ENCODE measurements at regions of chr18 and their contacts with region 1.

Region 1: GRCh38 chr18:3593904-3594661 is 144.1 kb downstream of the TGIF1 start:
- DNase-seq: peak; percentile 82 to 97 (median 89)
- ATAC-seq: peak; percentile 81
- H3K4me3 ChIP-seq: peak overlapping the region; percentile 67
- H3K4me3 Mint-ChIP-seq: peak overlapping the region; percentile 91
- H3K27ac ChIP-seq: peak overlapping the region; percentile 93 to 99
- H3K27ac Mint-ChIP-seq: peak overlapping the region; percentile 99
- H3K4me1 ChIP-seq: peaks cover 41% of the 10 kb centered on the region
- H3K4me1 Mint-ChIP-seq: peaks cover 50% of the 10 kb centered on the region
- H3K27me3 ChIP-seq: no peaks in the 10 kb centered on the region
- H3K27me3 Mint-ChIP-seq: no peaks in the 10 kb centered on the region
- CTCF ChIP-seq: peak; percentile 80

Region 2: DNA sequence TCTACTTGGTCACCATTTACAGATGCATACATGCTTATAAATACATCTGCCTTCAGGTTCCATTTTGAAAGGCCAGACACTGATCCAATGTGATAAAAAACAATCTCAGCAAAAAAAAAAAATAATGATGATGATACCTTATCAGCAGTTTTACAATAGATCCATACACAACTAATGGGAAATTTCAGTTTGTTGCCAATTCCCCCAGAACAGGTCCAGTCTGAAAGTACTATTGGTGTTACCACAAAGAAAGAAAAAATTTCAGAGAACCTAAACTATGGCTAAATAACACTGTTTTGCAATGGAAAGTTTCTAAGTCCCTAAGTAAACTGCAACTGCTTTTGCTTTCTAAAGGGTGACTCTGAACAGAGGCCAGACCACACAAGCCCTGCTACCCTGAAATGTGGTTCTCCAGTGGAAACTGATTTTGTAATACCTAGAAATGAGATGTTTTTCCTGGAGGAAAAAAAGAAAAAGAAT is 635.2 kb before region 1 on chr18:
- CTCF ChIA-PET with region 1: no interaction called
- POLR2A ChIA-PET with region 1: no interaction called
- intact Hi-C with region 1: loop called in 1 of 2 experiments (anchors 5 kb)
- DNase-seq: peak in 2 of 9 experiments; percentile 49 to 70
- ATAC-seq: no peak
- H3K4me3 ChIP-seq: no peak overlapping the region
- H3K4me3 Mint-ChIP-seq: peak overlapping the region; percentile 50
- H3K27ac ChIP-seq: peak overlapping the region; percentile 65 to 90
- H3K27ac Mint-ChIP-seq: peak overlapping the region; percentile 97
- H3K4me1 ChIP-seq: peaks cover 92% of the 10 kb centered on the region
- H3K4me1 Mint-ChIP-seq: peaks cover 89% of the 10 kb centered on the region
- H3K27me3 ChIP-seq: no peaks in the 10 kb centered on the region
- H3K27me3 Mint-ChIP-seq: no peaks in the 10 kb centered on the region
- CTCF ChIP-seq: no peak

Region 3: GRCh38 chr18:3062798-3063680 is 531.0 kb before region 1 on chr18:
- CTCF ChIA-PET with region 1: no interaction called
- POLR2A ChIA-PET with region 1: no interaction called
- intact Hi-C with region 1: loop called in 1 of 2 experiments (anchors 10 kb)
- DNase-seq: peak; percentile 42 to 79 (median 72)
- ATAC-seq: peak; percentile 27
- H3K4me3 ChIP-seq: no peak overlapping the region
- H3K4me3 Mint-ChIP-seq: peak overlapping the region; percentile 58
- H3K27ac ChIP-seq: peak overlapping the region; percentile 88 to 95
- H3K27ac Mint-ChIP-seq: peak overlapping the region; percentile 93
- H3K4me1 ChIP-seq: peaks cover 58% of the 10 kb centered on the region
- H3K4me1 Mint-ChIP-seq: peaks cover 67% of the 10 kb centered on the region
- H3K27me3 ChIP-seq: no peaks in the 10 kb centered on the region
- H3K27me3 Mint-ChIP-seq: no peaks in the 10 kb centered on the region
- CTCF ChIP-seq: peak; percentile 85

Region 4: DNA sequence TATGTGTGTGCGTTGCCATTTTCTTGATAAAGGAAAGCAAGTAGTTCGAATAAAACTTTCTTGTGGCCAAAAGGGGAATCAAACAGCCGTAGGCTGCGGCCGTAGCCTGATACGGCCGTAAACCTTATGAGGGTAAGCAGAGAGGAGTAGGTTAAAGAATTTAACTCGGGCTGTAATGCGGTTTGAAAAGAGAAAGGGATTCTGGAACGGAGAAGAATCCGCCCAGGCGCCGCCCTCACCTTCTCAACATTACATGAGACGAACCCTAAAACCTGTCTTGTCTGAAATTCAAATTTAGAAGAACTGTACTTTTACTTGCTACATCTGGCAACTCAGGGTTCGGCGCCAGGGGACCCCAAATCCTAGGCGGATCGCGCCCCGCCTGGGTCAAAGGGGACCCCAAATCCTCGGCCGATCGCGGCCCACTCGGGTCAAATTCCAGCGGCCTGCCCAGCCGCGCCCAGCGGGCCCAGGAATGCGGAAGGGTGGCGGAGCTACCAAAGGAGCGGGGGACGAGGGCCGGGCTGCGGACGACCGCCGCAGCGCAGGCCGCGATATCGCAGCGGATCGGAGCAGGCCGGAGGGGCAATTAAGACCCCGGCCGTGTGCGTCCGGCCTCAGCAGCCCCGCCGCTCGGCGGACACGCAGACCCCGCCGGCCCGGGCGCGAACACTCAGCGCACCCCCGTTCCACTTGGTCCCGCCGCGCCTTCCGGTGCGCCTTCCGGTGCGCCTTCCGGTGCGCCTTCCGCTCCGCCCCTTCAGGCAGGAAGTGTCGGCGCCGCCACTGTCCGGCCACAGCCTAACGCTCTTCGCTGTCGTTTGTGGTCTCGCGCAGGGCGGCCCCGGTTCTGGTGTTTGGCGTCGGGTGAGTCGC is 332.5 kb before region 1 on chr18 and contains the start of gene MYL12B:
- CTCF ChIA-PET with region 1: interaction called, 4 read pairs
- POLR2A ChIA-PET with region 1: interaction called, 20 read pairs
- intact Hi-C with region 1: loop called (anchors 2 kb)
- DNase-seq: peak; percentile 58 to 92 (median 79)
- ATAC-seq: peak; percentile 69
- H3K4me3 ChIP-seq: peak within 1 kb of the TSS; percentile 72 to 80
- H3K4me3 Mint-ChIP-seq: peak within 1 kb of the TSS; percentile 90
- H3K27ac ChIP-seq: peak within 1 kb of the TSS; percentile 96 to 97
- H3K27ac Mint-ChIP-seq: peak within 1 kb of the TSS; percentile 100
- H3K4me1 ChIP-seq: peaks cover 52% of the 10 kb centered on the region
- H3K4me1 Mint-ChIP-seq: peaks cover 82% of the 10 kb centered on the region
- H3K27me3 ChIP-seq: no peaks in the 10 kb centered on the region
- H3K27me3 Mint-ChIP-seq: no peaks in the 10 kb centered on the region
- CTCF ChIP-seq: no peak
- total RNA-seq, gene MYL12B: 117 to 132 TPM

Region 5: DNA sequence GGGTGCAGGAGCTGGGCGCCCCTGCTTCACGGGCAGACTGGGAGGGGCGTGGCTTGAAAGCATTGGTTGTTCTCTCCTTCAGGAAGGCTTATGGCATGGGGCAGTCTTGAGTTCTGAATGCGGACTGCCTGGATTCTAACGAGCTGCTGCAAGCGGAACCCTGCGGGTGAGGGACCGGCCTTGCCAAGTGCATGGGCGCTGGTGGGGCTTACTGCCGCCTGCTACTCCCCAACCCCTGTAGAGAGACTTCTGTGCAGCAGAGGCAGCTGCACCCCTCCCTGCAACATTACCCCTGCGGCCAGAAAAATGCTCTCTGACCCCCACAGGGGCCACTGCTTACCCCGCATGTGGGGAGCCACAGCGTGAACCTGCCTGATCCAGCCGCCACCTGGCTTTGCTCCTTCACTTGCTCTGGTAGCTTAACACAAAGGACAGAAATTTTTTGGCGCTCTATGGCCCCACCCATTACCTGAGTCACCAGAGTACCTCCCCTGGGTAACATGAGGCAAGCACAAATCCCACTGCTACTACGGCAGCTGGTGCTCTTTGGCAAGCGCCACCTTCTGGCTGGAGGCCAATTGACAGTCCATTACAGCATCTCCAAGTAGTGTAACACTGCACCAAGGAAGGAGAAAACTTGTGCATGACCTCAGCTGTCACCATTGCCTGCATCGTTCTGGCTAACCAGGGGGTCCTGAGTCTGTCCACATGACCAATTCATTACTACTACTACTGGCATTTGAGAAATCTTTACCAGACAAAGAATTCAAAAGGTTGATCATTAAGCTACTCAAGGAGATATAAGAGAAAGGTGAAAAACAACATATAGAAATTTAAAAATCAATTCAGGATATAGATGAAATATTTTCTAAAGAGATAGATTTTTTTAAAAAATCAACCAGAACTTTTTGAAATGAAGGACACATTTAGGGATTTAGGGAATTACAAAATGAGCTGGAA is 296.8 kb before region 1 on chr18:
- CTCF ChIA-PET with region 1: interaction called, 25 read pairs
- POLR2A ChIA-PET with region 1: interaction called, 17 read pairs
- intact Hi-C with region 1: loop called (anchors 2 kb)
- DNase-seq: peak; percentile 86 to 95 (median 93)
- ATAC-seq: peak; percentile 98
- H3K4me3 ChIP-seq: peak overlapping the region; percentile 71 to 87
- H3K4me3 Mint-ChIP-seq: peak overlapping the region; percentile 92
- H3K27ac ChIP-seq: peak overlapping the region; percentile 51 to 58
- H3K27ac Mint-ChIP-seq: peak overlapping the region; percentile 86
- H3K4me1 ChIP-seq: peaks cover 7% of the 10 kb centered on the region
- H3K4me1 Mint-ChIP-seq: peaks cover 8% of the 10 kb centered on the region
- H3K27me3 ChIP-seq: peaks cover 0 to 2% of the 10 kb centered on the region in 2 experiments
- H3K27me3 Mint-ChIP-seq: peaks cover 27% of the 10 kb centered on the region
- CTCF ChIP-seq: peak; percentile 79

Region 6: DNA sequence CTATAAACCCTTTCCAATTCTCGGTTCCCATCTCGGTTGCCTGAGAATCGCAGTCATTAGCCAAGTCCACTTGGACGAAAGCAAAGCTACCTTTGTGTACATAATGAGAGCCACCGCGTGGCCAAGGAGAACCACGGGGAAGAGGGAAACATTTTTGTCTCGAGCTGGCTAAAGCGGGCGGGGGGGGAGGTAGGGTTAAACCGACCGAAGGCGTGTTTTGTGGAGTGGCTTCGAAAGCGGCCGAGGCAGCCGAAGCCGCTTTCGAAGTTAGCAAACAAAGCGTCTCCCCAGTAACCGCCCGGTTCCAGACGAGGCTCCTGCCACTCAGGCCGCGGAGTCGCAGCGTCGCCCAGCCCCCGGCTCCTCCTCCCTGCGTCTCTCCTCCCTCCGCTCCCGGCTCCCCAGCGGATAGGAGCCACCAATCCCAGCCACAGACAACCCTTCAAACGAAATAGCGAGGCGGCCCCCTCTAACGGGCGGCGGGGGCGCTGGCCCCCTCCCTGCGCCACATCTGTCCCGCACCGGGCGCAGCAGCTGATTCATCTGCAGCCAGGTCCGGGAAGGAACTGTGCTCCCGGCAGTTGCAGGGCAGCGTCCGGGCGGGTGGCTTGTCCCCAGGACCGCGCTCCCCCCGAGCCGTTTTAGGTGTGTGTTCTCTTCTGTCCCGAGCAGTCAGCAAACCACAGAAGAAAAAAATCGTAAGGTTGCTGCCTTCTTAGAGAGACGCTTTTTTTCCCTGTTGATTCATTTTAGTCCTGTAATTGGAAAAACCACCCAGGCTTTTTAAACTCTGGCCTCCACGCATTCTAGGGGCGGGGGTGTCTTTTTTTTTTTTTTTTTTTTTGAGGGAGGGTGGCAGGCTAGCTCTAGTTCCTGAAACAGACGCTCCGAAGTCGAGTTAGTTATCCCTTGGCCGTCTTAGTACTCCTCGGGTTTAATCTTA is 145.9 kb before region 1 on chr18:
- CTCF ChIA-PET with region 1: interaction called, 60 read pairs
- POLR2A ChIA-PET with region 1: interaction called, 63 read pairs
- intact Hi-C with region 1: loop called (anchors 1 kb)
- DNase-seq: peak; percentile 65 to 94 (median 86)
- ATAC-seq: peak; percentile 41
- H3K4me3 ChIP-seq: peak overlapping the region; percentile 66 to 95
- H3K4me3 Mint-ChIP-seq: peak overlapping the region; percentile 90
- H3K27ac ChIP-seq: peak overlapping the region; percentile 95 to 100
- H3K27ac Mint-ChIP-seq: peak overlapping the region; percentile 99
- H3K4me1 ChIP-seq: peaks cover 15% of the 10 kb centered on the region
- H3K4me1 Mint-ChIP-seq: peaks cover 39% of the 10 kb centered on the region
- H3K27me3 ChIP-seq: no peaks in the 10 kb centered on the region
- H3K27me3 Mint-ChIP-seq: no peaks in the 10 kb centered on the region
- CTCF ChIP-seq: no peak

Region 7: GRCh38 chr18:3560755-3561154 is 33.3 kb before region 1 on chr18:
- CTCF ChIA-PET with region 1: no interaction called
- POLR2A ChIA-PET with region 1: no interaction called
- intact Hi-C with region 1: no loop called
- DNase-seq: no peak
- ATAC-seq: no peak
- H3K4me3 ChIP-seq: no peak overlapping the region
- H3K4me3 Mint-ChIP-seq: no peak overlapping the region
- H3K27ac ChIP-seq: no peak overlapping the region
- H3K27ac Mint-ChIP-seq: no peak overlapping the region
- H3K4me1 ChIP-seq: no peaks in the 10 kb centered on the region
- H3K4me1 Mint-ChIP-seq: no peaks in the 10 kb centered on the region
- H3K27me3 ChIP-seq: no peaks in the 10 kb centered on the region
- H3K27me3 Mint-ChIP-seq: no peaks in the 10 kb centered on the region
- CTCF ChIP-seq: no peak

Region 8: GRCh38 chr18:3604498-3605408 is 10.7 kb after region 1 on chr18:
- CTCF ChIA-PET with region 1: interaction called, 36 read pairs
- POLR2A ChIA-PET with region 1: interaction called, 53 read pairs
- intact Hi-C with region 1: loop called (anchors 1 kb)
- DNase-seq: peak in 3 of 9 experiments; percentile 22 to 79 (median 61)
- ATAC-seq: peak; percentile 62
- H3K4me3 ChIP-seq: peak overlapping the region; percentile 24 to 52
- H3K4me3 Mint-ChIP-seq: no peak overlapping the region
- H3K27ac ChIP-seq: peak overlapping the region; percentile 14 to 90
- H3K27ac Mint-ChIP-seq: no peak overlapping the region
- H3K4me1 ChIP-seq: peaks cover 44% of the 10 kb centered on the region
- H3K4me1 Mint-ChIP-seq: peaks cover 14% of the 10 kb centered on the region
- H3K27me3 ChIP-seq: no peaks in the 10 kb centered on the region
- H3K27me3 Mint-ChIP-seq: no peaks in the 10 kb centered on the region
- CTCF ChIP-seq: no peak